Naive thymus-derived CD4-positive, alpha-beta T cell (primary cell): ENCODE measurements at regions of chr15 and their contacts with region 1.

Region 1: DNA sequence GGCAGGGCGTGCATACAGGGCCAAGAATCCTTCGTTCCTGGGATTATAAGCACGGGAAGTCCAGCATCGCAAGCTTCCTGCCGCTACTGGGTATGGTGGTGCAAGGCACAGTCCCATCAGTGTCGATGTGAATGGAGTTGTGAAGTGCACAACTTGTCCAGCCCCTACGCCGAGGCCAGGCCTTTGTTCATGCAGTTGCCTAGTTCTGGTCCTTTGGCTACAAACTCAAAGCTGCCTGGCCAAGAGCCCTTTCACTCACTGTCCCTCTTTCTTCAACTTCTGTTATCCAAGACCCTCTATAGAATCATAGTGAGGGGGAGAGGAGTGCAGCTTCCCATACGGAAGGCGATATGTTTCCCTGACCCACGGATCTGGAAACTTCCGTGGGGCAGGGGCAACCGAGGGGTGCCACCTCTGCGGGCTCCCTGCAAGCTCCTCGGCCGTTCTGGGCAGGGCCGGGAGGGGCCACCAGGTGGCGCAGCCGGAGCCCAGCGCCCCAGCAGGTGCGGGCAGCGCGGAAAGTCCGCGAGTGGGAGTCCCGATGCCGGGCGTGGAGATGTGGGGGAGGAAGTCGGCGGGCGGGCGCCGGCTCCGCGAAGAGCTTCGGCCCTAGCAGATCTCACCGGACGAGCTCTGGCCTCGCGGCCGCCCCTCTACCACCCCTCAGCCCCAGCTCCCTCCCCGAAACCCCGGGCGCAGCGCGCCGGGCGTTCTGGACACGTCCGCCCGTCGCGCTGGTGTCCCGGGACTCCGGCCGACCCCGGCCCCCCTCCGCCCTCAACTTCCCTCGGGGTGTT is 693 bp downstream of the RASGRP1 start:
- DNase-seq: peak; percentile 75 to 95 (median 86)
- ATAC-seq: peak; percentile 85
- H3K4me3 ChIP-seq: peak overlapping the region; percentile 98
- H3K4me3 Mint-ChIP-seq: peak overlapping the region; percentile 80 to 99 (median 95)
- H3K27ac ChIP-seq: peak overlapping the region; percentile 91
- H3K27ac Mint-ChIP-seq: peak overlapping the region; percentile 87 to 99 (median 94)
- H3K4me1 ChIP-seq: peaks cover 51 to 60% of the 10 kb centered on the region in 2 donors
- H3K4me1 Mint-ChIP-seq: peaks cover 36 to 67% (median 64%) of the 10 kb centered on the region in 7 donors
- H3K27me3 ChIP-seq: no peaks in the 10 kb centered on the region
- H3K27me3 Mint-ChIP-seq: no peaks in the 10 kb centered on the region

Region 2: DNA sequence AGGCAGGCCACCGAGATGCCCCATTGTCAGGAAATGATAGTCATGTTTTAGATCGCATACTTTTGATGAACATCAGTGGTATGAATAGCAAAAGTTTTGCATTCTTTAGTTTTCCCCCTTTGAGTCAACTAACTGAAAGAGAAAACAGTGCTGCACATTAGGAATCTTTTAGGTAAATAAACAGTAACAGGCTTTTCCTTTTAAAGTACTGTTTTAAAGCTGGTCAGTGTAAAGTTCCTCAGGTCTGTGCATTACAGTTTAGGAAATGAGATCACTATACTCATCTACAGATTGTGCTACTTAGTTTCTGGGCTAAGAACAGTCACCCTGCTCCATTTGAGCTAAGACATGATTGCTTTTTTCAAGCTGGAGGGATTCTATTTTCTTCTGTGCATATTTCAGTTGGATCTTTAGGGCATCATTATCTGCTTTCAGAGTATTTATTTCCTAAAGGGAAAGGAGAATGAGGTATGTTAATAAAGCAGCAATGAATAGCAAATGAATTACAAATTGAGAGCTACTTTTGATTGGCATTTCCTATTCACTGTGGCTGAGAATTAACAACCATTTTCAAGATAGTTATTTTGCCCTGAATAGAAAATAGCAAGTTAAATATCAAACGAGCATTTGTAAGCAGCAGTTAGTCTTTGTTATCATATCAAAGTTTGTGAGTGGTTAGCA is 73.5 kb before region 1 on chr15:
- CTCF ChIA-PET with region 1: no interaction called
- POLR2A ChIA-PET with region 1: interaction called, 4 read pairs
- intact Hi-C with region 1: loop called (anchors 2 kb)
- DNase-seq: no peak
- ATAC-seq: no peak
- H3K4me3 ChIP-seq: no peak overlapping the region
- H3K4me3 Mint-ChIP-seq: no peak overlapping the region
- H3K27ac ChIP-seq: peak overlapping the region; percentile 14
- H3K27ac Mint-ChIP-seq: peak overlapping the region in 8 of 9 donors; percentile 18 to 93 (median 67)
- H3K4me1 ChIP-seq: peaks cover 0 to 13% of the 10 kb centered on the region in 2 donors
- H3K4me1 Mint-ChIP-seq: peaks cover 7 to 48% (median 42%) of the 10 kb centered on the region in 7 donors
- H3K27me3 ChIP-seq: no peaks in the 10 kb centered on the region
- H3K27me3 Mint-ChIP-seq: no peaks in the 10 kb centered on the region

Region 3: GRCh38 chr15:38547255-38547997 is 16.5 kb before region 1 on chr15:
- CTCF ChIA-PET with region 1: interaction called, 26 read pairs
- POLR2A ChIA-PET with region 1: interaction called, 10 read pairs
- intact Hi-C with region 1: loop called in 1 of 2 experiments (anchors 1 kb)
- DNase-seq: peak in 1 of 9 donors; percentile 33
- ATAC-seq: no peak
- H3K4me3 ChIP-seq: no peak overlapping the region
- H3K4me3 Mint-ChIP-seq: peak overlapping the region in 8 of 10 donors; percentile 9 to 76 (median 52)
- H3K27ac ChIP-seq: no peak overlapping the region
- H3K27ac Mint-ChIP-seq: peak overlapping the region; percentile 31 to 97 (median 83)
- H3K4me1 ChIP-seq: peaks cover 62 to 64% of the 10 kb centered on the region in 2 donors
- H3K4me1 Mint-ChIP-seq: peaks cover 54 to 93% (median 89%) of the 10 kb centered on the region in 7 donors
- H3K27me3 ChIP-seq: no peaks in the 10 kb centered on the region
- H3K27me3 Mint-ChIP-seq: no peaks in the 10 kb centered on the region

Region 4: DNA sequence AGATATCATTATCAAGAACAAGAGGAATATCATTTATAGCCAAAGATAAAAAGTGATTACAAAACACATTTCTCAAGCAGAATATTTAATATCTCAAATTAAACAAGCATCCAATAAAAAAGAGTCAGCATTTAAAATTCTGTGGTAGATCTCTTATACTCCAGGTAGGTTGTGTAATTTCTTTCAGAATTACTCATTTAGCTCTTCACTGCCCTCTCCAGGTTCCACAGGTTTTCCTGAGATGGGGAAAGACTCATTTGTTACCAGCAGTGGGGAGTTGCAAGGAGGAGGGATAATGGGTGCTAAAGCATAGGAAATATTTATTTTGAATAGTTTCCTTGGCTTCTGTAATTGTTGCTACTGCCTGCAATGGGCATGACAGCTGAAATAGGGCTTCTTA is 83.8 kb after region 1 on chr15:
- CTCF ChIA-PET with region 1: interaction called, 77 read pairs
- POLR2A ChIA-PET with region 1: interaction called, 245 read pairs
- intact Hi-C with region 1: loop called in 1 of 2 experiments (anchors 1 kb)
- DNase-seq: no peak
- ATAC-seq: no peak
- H3K4me3 ChIP-seq: no peak overlapping the region
- H3K4me3 Mint-ChIP-seq: peak overlapping the region in 6 of 10 donors; percentile 2 to 78 (median 68)
- H3K27ac ChIP-seq: no peak overlapping the region
- H3K27ac Mint-ChIP-seq: peak overlapping the region in 8 of 9 donors; percentile 85 to 99 (median 96)
- H3K4me1 ChIP-seq: peaks cover 47 to 72% of the 10 kb centered on the region in 2 donors
- H3K4me1 Mint-ChIP-seq: peaks cover 48 to 93% (median 85%) of the 10 kb centered on the region in 7 donors
- H3K27me3 ChIP-seq: no peaks in the 10 kb centered on the region
- H3K27me3 Mint-ChIP-seq: no peaks in the 10 kb centered on the region

Region 5: DNA sequence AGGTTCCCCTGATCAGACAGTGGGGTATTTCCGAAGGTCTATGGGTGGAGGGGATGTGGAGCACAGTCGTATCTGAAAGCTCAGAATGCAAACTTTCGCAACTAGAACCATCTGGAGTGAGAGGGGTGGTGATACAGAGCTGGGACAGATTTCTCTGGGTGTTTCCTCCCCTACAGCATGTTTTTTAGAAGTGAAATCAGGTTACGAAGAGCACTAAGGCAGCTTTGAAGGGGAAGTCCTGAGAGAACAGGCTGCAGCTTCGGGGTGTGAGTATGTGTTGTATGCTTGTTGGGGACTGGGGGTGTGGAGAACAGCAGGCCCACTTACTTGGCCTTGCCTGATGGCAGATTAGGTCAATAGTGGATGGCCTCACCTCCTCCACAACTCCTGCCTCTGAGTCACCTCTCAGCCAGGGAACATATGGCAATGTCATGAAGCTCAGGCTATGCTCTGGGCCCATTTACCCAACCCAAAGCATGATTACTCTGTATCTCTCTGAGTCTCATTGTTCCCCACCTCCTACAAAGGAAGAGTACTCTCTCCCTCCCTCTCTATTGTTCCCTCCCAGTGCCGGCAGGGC is 107.8 kb after region 1 on chr15:
- CTCF ChIA-PET with region 1: interaction called, 75 read pairs
- POLR2A ChIA-PET with region 1: interaction called, 49 read pairs
- intact Hi-C with region 1: loop called (anchors 1 kb)
- DNase-seq: peak in 8 of 9 donors; percentile 55 to 84 (median 66)
- ATAC-seq: peak; percentile 79
- H3K4me3 ChIP-seq: peak overlapping the region; percentile 28
- H3K4me3 Mint-ChIP-seq: peak overlapping the region; percentile 27 to 86 (median 70)
- H3K27ac ChIP-seq: peak overlapping the region; percentile 90
- H3K27ac Mint-ChIP-seq: peak overlapping the region; percentile 93 to 100 (median 98)
- H3K4me1 ChIP-seq: peaks cover 73 to 74% of the 10 kb centered on the region in 2 donors
- H3K4me1 Mint-ChIP-seq: peaks cover 47 to 88% (median 80%) of the 10 kb centered on the region in 7 donors
- H3K27me3 ChIP-seq: no peaks in the 10 kb centered on the region
- H3K27me3 Mint-ChIP-seq: no peaks in the 10 kb centered on the region

Region 6: GRCh38 chr15:38699633-38700230 is 135.8 kb after region 1 on chr15:
- CTCF ChIA-PET with region 1: interaction called, 24 read pairs
- POLR2A ChIA-PET with region 1: interaction called, 6 read pairs
- intact Hi-C with region 1: no loop called
- DNase-seq: peak in 8 of 9 donors; percentile 43 to 77 (median 71)
- ATAC-seq: peak; percentile 84
- H3K4me3 ChIP-seq: no peak overlapping the region
- H3K4me3 Mint-ChIP-seq: peak overlapping the region in 4 of 10 donors; percentile 8 to 73 (median 48)
- H3K27ac ChIP-seq: no peak overlapping the region
- H3K27ac Mint-ChIP-seq: peak overlapping the region; percentile 34 to 92 (median 77)
- H3K4me1 ChIP-seq: peaks cover 36 to 48% of the 10 kb centered on the region in 2 donors
- H3K4me1 Mint-ChIP-seq: peaks cover 23 to 71% (median 44%) of the 10 kb centered on the region in 7 donors
- H3K27me3 ChIP-seq: no peaks in the 10 kb centered on the region
- H3K27me3 Mint-ChIP-seq: no peaks in the 10 kb centered on the region

Region 7: GRCh38 chr15:39140060-39140604 is 576.2 kb after region 1 on chr15:
- CTCF ChIA-PET with region 1: no interaction called
- POLR2A ChIA-PET with region 1: no interaction called
- intact Hi-C with region 1: no loop called
- DNase-seq: peak in 1 of 9 donors; percentile 24
- ATAC-seq: no peak
- H3K4me3 ChIP-seq: no peak overlapping the region
- H3K4me3 Mint-ChIP-seq: peak overlapping the region in 1 of 10 donors; percentile 15
- H3K27ac ChIP-seq: no peak overlapping the region
- H3K27ac Mint-ChIP-seq: peak overlapping the region in 1 of 9 donors; percentile 53
- H3K4me1 ChIP-seq: no peaks in the 10 kb centered on the region
- H3K4me1 Mint-ChIP-seq: peaks cover 0 to 40% (median 0%) of the 10 kb centered on the region in 7 donors
- H3K27me3 ChIP-seq: no peaks in the 10 kb centered on the region
- H3K27me3 Mint-ChIP-seq: peaks cover 0 to 13% (median 6%) of the 10 kb centered on the region in 5 donors

Region 8: DNA sequence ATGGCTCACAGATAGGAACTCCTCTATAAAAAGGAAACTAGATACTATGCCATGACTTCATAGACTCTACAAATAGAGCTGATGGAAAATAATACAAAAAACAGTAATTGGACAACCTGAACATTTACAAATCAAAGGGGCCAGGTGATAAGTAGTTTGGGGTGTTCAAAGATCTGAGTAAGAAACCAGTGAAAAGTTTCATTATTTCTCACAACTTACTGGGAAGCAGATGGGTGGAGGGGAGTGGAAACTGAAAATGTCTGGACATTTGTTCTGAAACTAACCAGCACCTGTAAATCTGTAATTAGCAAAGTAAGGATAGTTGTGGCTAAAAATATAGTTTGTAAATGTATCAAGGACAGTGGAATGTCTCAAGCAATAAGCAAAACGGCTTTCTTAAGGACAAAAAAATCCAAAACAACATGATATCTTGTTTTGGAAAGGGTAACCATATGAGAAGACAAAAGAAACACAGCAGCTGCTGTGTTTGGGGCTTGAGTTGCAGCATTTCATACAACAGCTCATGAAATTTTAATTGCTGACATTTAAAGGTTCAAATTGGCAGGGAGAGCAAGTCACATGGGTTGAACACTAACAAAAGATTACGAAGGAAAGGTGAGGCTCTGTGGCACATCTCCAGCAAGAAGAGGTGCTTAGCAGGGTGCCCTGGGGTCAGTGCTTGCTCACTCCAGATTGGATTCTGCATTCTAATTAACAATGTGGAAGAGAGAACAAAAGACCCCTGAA is 990.2 kb after region 1 on chr15:
- CTCF ChIA-PET with region 1: no interaction called
- POLR2A ChIA-PET with region 1: no interaction called
- intact Hi-C with region 1: no loop called
- DNase-seq: no peak
- ATAC-seq: no peak
- H3K4me3 ChIP-seq: no peak overlapping the region
- H3K4me3 Mint-ChIP-seq: no peak overlapping the region
- H3K27ac ChIP-seq: no peak overlapping the region
- H3K27ac Mint-ChIP-seq: no peak overlapping the region
- H3K4me1 ChIP-seq: no peaks in the 10 kb centered on the region
- H3K4me1 Mint-ChIP-seq: peaks cover 0 to 2% (median 0%) of the 10 kb centered on the region in 7 donors
- H3K27me3 ChIP-seq: no peaks in the 10 kb centered on the region
- H3K27me3 Mint-ChIP-seq: peaks cover 9 to 21% (median 15%) of the 10 kb centered on the region in 5 donors